ENCODE measurements at regions of chr11 and their contacts with region 1.

Region 1: DNA sequence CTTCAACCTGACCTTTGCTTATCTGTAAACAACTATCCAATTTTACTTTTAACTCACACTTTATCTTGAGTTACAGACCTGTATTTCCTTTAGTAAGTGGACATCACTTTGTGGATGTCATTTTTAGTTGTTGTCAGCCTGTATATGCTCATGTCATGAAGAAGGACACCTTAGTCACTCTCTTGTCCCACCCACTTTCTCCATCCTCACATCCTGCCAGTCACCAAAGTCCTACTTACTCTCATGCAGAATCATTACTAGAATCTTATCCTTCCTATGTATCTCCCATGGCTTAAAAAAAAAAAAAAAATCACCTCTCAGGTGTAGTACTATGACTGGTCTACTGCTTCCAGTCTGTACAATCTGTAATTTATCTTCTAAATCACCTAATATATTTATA is 43.3 kb downstream of the SESN3 start:
- DNase-seq: no peak
- H3K4me3 ChIP-seq: no peak overlapping the region
- H3K4me3 Mint-ChIP-seq: no peak overlapping the region
- H3K27ac ChIP-seq: no peak overlapping the region
- H3K27ac Mint-ChIP-seq: peak overlapping the region in 5 of 7 donors; percentile 5 to 80 (median 60)
- H3K4me1 ChIP-seq: no peaks in the 10 kb centered on the region
- H3K4me1 Mint-ChIP-seq: peaks cover 8 to 15% (median 12%) of the 10 kb centered on the region in 4 donors
- H3K27me3 ChIP-seq: no peaks in the 10 kb centered on the region
- H3K27me3 Mint-ChIP-seq: no peaks in the 10 kb centered on the region

Region 2: GRCh38 chr11:95200781-95201457 is 13.2 kb after region 1 on chr11:
- CTCF ChIA-PET with region 1: interaction called, 3 read pairs
- POLR2A ChIA-PET with region 1: no interaction called
- intact Hi-C with region 1: loop called (anchors 2 kb)
- DNase-seq: no peak
- H3K4me3 ChIP-seq: no peak overlapping the region
- H3K4me3 Mint-ChIP-seq: no peak overlapping the region
- H3K27ac ChIP-seq: no peak overlapping the region
- H3K27ac Mint-ChIP-seq: no peak overlapping the region
- H3K4me1 ChIP-seq: peaks cover 14% of the 10 kb centered on the region
- H3K4me1 Mint-ChIP-seq: peaks cover 34 to 68% (median 42%) of the 10 kb centered on the region in 4 donors
- H3K27me3 ChIP-seq: no peaks in the 10 kb centered on the region
- H3K27me3 Mint-ChIP-seq: no peaks in the 10 kb centered on the region

Measured in CD4-positive, alpha-beta memory T cell (primary cell).